ENCODE measurements at regions of chr4 and their contacts with region 1.

Region 1: DNA sequence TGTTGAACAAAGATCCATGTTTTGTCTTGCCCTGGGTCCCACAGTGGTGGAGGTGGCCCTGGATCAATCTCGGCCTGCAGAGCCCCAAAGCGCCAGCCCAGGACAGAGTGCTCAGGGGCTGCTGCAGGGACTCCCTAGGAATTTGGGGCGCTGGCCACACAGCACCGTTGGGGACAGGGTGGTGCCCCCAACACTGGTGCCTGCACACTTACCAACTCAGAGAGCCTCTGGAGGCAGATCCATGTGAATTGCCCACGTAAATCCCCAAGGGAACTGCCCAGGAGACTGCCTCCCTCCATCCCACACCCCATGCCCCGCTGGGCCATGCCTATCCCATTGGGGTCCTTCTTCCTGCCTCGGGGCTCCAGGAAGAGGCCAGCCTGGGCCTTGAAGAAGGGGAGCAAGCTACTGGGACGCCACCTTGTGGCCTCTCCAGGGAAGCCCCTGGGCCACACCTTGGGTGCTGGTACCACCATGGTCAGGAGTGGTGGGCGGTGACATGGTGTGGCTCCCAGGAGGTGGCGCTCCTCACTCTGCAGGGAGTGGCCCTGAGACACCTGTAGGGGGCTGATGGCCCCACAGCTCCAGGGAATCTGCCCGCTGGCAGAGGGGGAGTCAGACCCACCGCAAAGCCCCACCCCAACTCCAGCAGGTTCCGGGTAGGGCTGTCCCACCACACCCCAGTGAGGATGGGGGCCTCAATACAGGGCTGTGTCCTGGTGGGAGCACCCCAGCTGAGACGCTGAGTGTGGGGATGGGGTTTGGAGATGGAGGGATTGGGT is 22.8 kb downstream of the CFAP99 start:
- DNase-seq: peak; percentile 53 to 64 (median 62)
- H3K4me3 ChIP-seq: no peak overlapping the region
- H3K4me3 Mint-ChIP-seq: no peak overlapping the region
- H3K27ac ChIP-seq: no peak overlapping the region
- H3K27ac Mint-ChIP-seq: no peak overlapping the region
- H3K4me1 ChIP-seq: no peaks in the 10 kb centered on the region
- H3K4me1 Mint-ChIP-seq: peaks cover 2% of the 10 kb centered on the region
- H3K27me3 ChIP-seq: no peaks in the 10 kb centered on the region
- H3K27me3 Mint-ChIP-seq: peaks cover 0 to 4% (median 2%) of the 10 kb centered on the region in 3 donors
- CTCF ChIP-seq: peak; percentile 90

Region 2: GRCh38 chr4:2220016-2220630 is 221.5 kb before region 1 on chr4:
- intact Hi-C with region 1: loop called (anchors 5 kb)
- DNase-seq: peak; percentile 38 to 58 (median 46)
- H3K4me3 ChIP-seq: no peak overlapping the region
- H3K4me3 Mint-ChIP-seq: peak overlapping the region in 1 of 2 donors; percentile 56
- H3K27ac ChIP-seq: no peak overlapping the region
- H3K27ac Mint-ChIP-seq: peak overlapping the region in 1 of 7 donors; percentile 39
- H3K4me1 ChIP-seq: no peaks in the 10 kb centered on the region
- H3K4me1 Mint-ChIP-seq: peaks cover 5% of the 10 kb centered on the region
- H3K27me3 ChIP-seq: no peaks in the 10 kb centered on the region
- H3K27me3 Mint-ChIP-seq: peaks cover 0 to 3% (median 0%) of the 10 kb centered on the region in 3 donors
- CTCF ChIP-seq: peak; percentile 91

Region 3: GRCh38 chr4:2560167-2560566 is 118.6 kb after region 1 on chr4:
- intact Hi-C with region 1: no loop called
- DNase-seq: no peak
- H3K4me3 ChIP-seq: no peak overlapping the region
- H3K4me3 Mint-ChIP-seq: no peak overlapping the region
- H3K27ac ChIP-seq: no peak overlapping the region
- H3K27ac Mint-ChIP-seq: no peak overlapping the region
- H3K4me1 ChIP-seq: no peaks in the 10 kb centered on the region
- H3K4me1 Mint-ChIP-seq: peaks cover 4% of the 10 kb centered on the region
- H3K27me3 ChIP-seq: no peaks in the 10 kb centered on the region
- H3K27me3 Mint-ChIP-seq: no peaks in the 10 kb centered on the region
- CTCF ChIP-seq: no peak

Measured in CD14-positive monocyte (primary cell).